IMR-90 (cell line): ENCODE measurements at regions of chr12 and their contacts with region 1.

Region 1: GRCh38 chr12:44317651-44318126 is 481.8 kb downstream of the TMEM117 start:
- DNase-seq: peak; percentile 40
- ATAC-seq: peak; percentile 92
- H3K4me3 ChIP-seq: no peak overlapping the region
- H3K27ac ChIP-seq: no peak overlapping the region
- H3K4me1 ChIP-seq: no peaks in the 10 kb centered on the region
- H3K27me3 ChIP-seq: no peaks in the 10 kb centered on the region
- CTCF ChIP-seq: peak; percentile 45
- POLR2A ChIP-seq: no peak
- RAD21 ChIP-seq: peak; percentile 33; the same call in 1 of the 2 replicates

Region 2: DNA sequence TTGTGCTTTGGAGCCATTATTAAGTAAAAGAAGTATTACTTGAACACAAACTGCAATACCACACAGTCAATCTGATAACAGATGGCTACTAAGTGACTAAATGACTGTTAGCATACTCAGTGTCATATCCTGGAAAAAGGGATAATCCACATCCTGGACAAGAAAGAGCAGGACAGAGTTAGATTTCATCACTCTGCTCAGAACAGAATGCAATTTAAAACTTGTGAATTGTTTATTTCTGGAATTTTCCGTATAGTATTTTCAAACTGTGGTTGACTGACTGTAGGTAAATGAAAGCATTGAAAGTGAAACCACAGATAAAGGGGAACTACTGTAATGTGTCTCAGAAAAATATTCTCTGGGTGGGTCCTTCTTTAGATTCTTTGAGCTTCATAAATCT is 23.0 kb before region 1 on chr12:
- CTCF ChIA-PET with region 1: no interaction called
- POLR2A ChIA-PET with region 1: interaction called, 11 read pairs
- dilution Hi-C with region 1: no loop called
- in situ Hi-C with region 1: no loop called
- intact Hi-C with region 1: no loop called
- DNase-seq: no peak
- ATAC-seq: no peak
- H3K4me3 ChIP-seq: no peak overlapping the region
- H3K27ac ChIP-seq: no peak overlapping the region
- H3K4me1 ChIP-seq: no peaks in the 10 kb centered on the region
- H3K27me3 ChIP-seq: no peaks in the 10 kb centered on the region
- CTCF ChIP-seq: no peak
- POLR2A ChIP-seq: no peak
- RAD21 ChIP-seq: no peak

Region 3: GRCh38 chr12:44358636-44359035 is 40.9 kb after region 1 on chr12:
- CTCF ChIA-PET with region 1: no interaction called
- POLR2A ChIA-PET with region 1: no interaction called
- dilution Hi-C with region 1: no loop called
- in situ Hi-C with region 1: no loop called
- intact Hi-C with region 1: no loop called
- DNase-seq: no peak
- ATAC-seq: no peak
- H3K4me3 ChIP-seq: no peak overlapping the region
- H3K27ac ChIP-seq: no peak overlapping the region
- H3K4me1 ChIP-seq: no peaks in the 10 kb centered on the region
- H3K27me3 ChIP-seq: no peaks in the 10 kb centered on the region
- CTCF ChIP-seq: no peak
- POLR2A ChIP-seq: no peak
- RAD21 ChIP-seq: no peak